ENCODE measurements at regions of chr20 and their contacts with region 1.

Region 1: GRCh38 chr20:62937366-62938104 is 412 bp upstream of the GID8 start:
- DNase-seq: peak; percentile 85 to 98
- H3K4me3 ChIP-seq: peak overlapping the region; percentile 82 to 91
- H3K27ac ChIP-seq: peak overlapping the region; percentile 89 to 93
- H3K4me1 ChIP-seq: peaks cover 18 to 26% of the 10 kb centered on the region in 2 donors
- H3K27me3 ChIP-seq: no peaks in the 10 kb centered on the region
- CTCF ChIP-seq: no peak

Region 2: GRCh38 chr20:62627901-62628612 is 309.5 kb before region 1 on chr20:
- intact Hi-C with region 1: no loop called
- DNase-seq: no peak
- H3K4me3 ChIP-seq: no peak overlapping the region
- H3K27ac ChIP-seq: no peak overlapping the region
- H3K4me1 ChIP-seq: peaks cover 3 to 8% of the 10 kb centered on the region in 2 donors
- H3K27me3 ChIP-seq: no peaks in the 10 kb centered on the region
- CTCF ChIP-seq: no peak

Region 3: GRCh38 chr20:62861726-62862336 is 75.7 kb before region 1 on chr20 and contains the start of gene TCFL5:
- intact Hi-C with region 1: loop called (anchors 5 kb)
- DNase-seq: peak; percentile 53 to 93
- H3K4me3 ChIP-seq: peak within 1 kb of the TSS; percentile 57 to 69
- H3K27ac ChIP-seq: peak within 1 kb of the TSS; percentile 56 to 63
- H3K4me1 ChIP-seq: peaks cover 4 to 7% of the 10 kb centered on the region in 2 donors
- H3K27me3 ChIP-seq: no peaks in the 10 kb centered on the region
- CTCF ChIP-seq: no peak
- total RNA-seq, gene TCFL5: 1.1 TPM

Region 4: DNA sequence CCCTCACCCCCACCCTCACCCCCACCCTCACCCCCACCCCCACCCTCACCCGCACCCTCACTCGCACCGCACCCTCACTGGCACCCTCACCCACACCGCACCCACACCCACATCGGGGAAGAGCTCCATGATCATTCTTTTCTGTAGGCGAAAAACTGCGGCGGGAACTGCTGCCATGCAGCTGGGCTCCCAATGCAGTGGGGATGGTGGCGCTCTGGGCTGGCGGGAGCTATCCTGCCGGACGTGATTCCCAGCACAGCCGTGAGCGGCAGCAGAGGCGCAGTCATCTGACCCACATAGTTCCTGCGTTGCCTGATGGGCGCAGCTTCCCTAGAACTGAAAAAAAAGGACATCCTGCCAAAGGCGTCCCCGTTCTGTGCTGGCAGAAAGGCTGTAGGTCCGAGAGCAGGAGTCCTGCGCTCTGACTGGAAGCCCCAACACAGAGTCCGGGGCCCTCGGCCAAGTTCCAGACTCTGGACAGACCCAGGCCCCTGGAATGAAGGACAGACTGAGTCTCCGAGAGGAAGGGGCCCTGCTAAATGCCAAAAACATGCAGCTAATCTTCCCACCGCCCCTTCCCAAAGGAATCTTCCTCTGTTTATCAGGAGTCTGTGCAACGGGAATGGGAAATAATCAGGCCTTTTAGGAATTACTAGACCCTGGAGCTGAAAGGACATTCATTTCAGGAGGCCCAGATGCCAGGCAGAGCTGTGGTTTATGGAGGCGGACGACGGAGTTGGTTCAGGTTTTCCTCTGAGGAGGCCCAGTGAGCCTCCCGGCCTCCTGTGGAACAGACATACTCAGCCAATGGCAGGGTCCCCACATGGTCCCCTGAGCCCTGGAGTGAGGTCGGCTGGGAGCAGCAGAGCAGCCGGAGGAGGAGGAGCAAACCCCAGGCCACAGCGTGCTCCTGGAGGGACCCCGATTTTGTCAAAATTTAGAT is 61.8 kb before region 1 on chr20:
- intact Hi-C with region 1: loop called (anchors 5 kb)
- DNase-seq: peak; percentile 37 to 91
- H3K4me3 ChIP-seq: peak overlapping the region in 1 of 2 donors; percentile 29
- H3K27ac ChIP-seq: peak overlapping the region; percentile 79 to 87
- H3K4me1 ChIP-seq: peaks cover 9 to 14% of the 10 kb centered on the region in 2 donors
- H3K27me3 ChIP-seq: no peaks in the 10 kb centered on the region
- CTCF ChIP-seq: peak; percentile 26 to 63 (median 58)

Region 5: GRCh38 chr20:62926239-62927104 is 11.1 kb before region 1 on chr20 and contains the start of gene DIDO1:
- intact Hi-C with region 1: loop called (anchors 1 kb)
- DNase-seq: peak; percentile 52 to 89
- H3K4me3 ChIP-seq: peak within 1 kb of the TSS; percentile 79 to 97
- H3K27ac ChIP-seq: peak within 1 kb of the TSS; percentile 96 to 98
- H3K4me1 ChIP-seq: peaks cover 20 to 63% of the 10 kb centered on the region in 2 donors
- H3K27me3 ChIP-seq: no peaks in the 10 kb centered on the region
- CTCF ChIP-seq: peak; percentile 47 to 83 (median 70)
- total RNA-seq, gene DIDO1: 42.4 TPM

Region 6: GRCh38 chr20:62952373-62952967 is 14.9 kb after region 1 on chr20 and contains the start of gene SLC17A9:
- intact Hi-C with region 1: loop called (anchors 1 kb)
- DNase-seq: peak; percentile 38 to 87
- H3K4me3 ChIP-seq: peak within 1 kb of the TSS; percentile 26 to 59
- H3K27ac ChIP-seq: peak within 1 kb of the TSS; percentile 87 to 88
- H3K4me1 ChIP-seq: peaks cover 8 to 15% of the 10 kb centered on the region in 2 donors
- H3K27me3 ChIP-seq: no peaks in the 10 kb centered on the region
- CTCF ChIP-seq: no peak
- total RNA-seq, gene SLC17A9: 30.0 TPM